ENCODE measurements at regions of chr16 and their contacts with region 1.

Region 1: DNA sequence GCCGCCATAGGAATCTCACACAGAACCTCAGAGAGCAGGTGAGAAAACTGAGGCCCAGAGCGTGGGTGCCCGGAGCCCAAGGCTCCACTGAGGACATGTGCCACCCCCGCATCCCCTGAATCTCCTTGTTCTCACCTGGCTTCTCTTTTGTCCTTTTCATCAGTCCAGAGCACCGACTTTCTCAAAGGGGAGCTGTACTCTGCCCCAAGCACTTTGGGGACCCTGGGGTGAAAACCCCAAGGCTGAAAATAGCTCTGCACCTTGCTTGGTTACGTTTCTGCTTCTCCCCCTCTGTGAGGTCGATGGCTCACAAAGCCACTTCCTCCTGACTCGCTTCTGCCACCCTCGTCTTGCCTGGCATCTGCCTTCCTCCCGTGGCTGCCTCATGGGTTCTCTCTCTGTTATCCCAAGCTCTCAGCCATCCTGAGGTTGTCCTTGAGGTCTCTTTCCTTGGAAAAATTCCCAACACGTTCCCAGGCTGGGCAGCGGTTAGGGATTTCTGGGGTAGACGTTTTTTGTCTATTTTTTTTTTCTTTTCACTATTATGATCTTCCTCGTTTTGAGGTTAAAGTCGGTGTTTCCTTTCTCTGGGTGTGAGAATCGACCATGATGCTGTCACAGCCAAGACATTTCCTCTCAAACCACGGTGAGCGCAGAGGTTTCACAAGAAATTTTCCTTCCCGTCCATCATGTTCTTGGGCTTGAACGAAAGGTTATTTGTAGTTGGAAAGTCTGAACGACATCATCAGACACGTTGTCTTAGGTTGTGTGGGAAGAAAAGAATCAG is 37.2 kb downstream of the IRF8 start:
- DNase-seq: peak; percentile 92
- ATAC-seq: peak; percentile 80
- H3K4me3 ChIP-seq: peak overlapping the region in 4 of 5 experiments; percentile 47 to 63 (median 55)
- H3K4me3 Mint-ChIP-seq: peak overlapping the region; percentile 81
- H3K27ac ChIP-seq: peak overlapping the region; percentile 96 to 98
- H3K27ac Mint-ChIP-seq: peak overlapping the region; percentile 94
- H3K4me1 ChIP-seq: peaks cover 76 to 85% of the 10 kb centered on the region in 2 donors
- H3K4me1 Mint-ChIP-seq: peaks cover 84% of the 10 kb centered on the region
- H3K27me3 ChIP-seq: no peaks in the 10 kb centered on the region
- H3K27me3 Mint-ChIP-seq: no peaks in the 10 kb centered on the region
- CTCF ChIP-seq: no peak

Region 2: DNA sequence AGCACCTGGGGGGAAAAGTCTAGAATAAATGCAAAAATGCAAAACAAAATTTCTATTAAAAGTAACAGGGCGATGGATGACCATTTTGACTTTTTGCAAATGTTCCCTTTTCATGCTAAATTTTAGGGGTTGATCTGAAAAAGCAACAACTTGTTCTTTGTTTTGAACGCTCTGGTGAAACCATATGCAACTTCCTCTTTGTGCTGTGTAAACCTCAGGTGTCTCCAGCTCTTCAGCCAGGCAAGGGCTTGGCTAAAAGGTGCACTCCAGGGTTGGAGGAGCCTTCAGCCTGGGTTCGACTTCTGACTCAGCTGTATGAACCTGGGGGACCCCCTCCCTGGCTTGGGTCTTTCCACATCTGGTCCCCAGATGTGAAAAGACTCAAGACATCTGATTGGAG is 27.7 kb before region 1 on chr16:
- CTCF ChIA-PET with region 1: interaction called, 6 read pairs
- POLR2A ChIA-PET with region 1: interaction called, 8 read pairs
- intact Hi-C with region 1: loop called (anchors 1 kb)
- DNase-seq: peak; percentile 85
- ATAC-seq: peak; percentile 62
- H3K4me3 ChIP-seq: peak overlapping the region in 4 of 5 experiments; percentile 1 to 50 (median 13)
- H3K4me3 Mint-ChIP-seq: peak overlapping the region; percentile 75
- H3K27ac ChIP-seq: peak overlapping the region; percentile 80 to 82
- H3K27ac Mint-ChIP-seq: peak overlapping the region; percentile 92
- H3K4me1 ChIP-seq: peaks cover 97 to 100% of the 10 kb centered on the region in 2 donors
- H3K4me1 Mint-ChIP-seq: peaks cover 95% of the 10 kb centered on the region
- H3K27me3 ChIP-seq: no peaks in the 10 kb centered on the region
- H3K27me3 Mint-ChIP-seq: no peaks in the 10 kb centered on the region
- CTCF ChIP-seq: no peak

Measured in B cell (primary cell).